BJ (cell line): ENCODE measurements at regions of chr6 and their contacts with region 1.

Region 1: DNA sequence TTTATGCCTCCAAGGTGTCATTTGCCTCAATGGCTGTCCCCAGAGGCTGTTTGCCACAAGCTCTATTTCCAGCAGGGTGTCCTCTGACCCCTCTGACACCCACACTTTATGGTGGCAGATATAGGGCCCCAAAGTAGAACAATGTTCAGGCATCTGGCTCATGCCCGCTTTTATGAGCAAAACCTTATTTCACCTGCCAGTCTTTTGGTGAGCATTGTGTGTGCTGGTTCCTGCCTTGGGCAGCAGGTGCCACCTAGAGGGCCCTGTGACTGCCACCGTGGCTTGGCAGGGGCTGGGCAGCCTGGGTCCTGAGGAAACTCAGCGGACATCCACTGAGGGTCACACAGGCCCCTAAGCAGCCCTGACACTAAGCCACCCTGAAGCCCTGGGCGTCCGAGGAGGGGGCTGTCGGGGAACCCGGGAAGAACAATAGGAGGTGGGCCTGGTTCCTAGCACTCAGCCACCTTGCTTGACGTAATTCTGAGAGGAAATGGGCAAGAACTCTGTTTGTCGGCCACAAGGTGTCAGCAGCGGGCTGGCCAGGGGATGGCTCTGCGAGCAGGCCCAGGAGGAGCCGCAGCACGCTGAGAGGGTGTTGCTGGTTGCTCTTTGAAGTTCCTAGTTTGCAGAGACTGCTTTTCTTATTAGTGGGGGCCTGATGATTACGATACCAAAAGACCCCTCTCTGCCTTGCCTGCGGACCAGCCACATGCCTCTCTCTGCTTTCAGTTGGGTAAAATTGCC is 148.9 kb downstream of the SCML4 start:
- DNase-seq: no peak
- H3K4me3 ChIP-seq: no peak overlapping the region
- H3K27me3 ChIP-seq: no peaks in the 10 kb centered on the region
- CTCF ChIP-seq: peak; percentile 93

Region 2: GRCh38 chr6:107539409-107539808 is 135.8 kb before region 1 on chr6:
- CTCF ChIA-PET with region 1: no interaction called
- POLR2A ChIA-PET with region 1: no interaction called
- DNase-seq: no peak
- H3K4me3 ChIP-seq: no peak overlapping the region
- H3K27me3 ChIP-seq: no peaks in the 10 kb centered on the region; the same call in 1 of the 2 replicates
- CTCF ChIP-seq: no peak

Region 3: DNA sequence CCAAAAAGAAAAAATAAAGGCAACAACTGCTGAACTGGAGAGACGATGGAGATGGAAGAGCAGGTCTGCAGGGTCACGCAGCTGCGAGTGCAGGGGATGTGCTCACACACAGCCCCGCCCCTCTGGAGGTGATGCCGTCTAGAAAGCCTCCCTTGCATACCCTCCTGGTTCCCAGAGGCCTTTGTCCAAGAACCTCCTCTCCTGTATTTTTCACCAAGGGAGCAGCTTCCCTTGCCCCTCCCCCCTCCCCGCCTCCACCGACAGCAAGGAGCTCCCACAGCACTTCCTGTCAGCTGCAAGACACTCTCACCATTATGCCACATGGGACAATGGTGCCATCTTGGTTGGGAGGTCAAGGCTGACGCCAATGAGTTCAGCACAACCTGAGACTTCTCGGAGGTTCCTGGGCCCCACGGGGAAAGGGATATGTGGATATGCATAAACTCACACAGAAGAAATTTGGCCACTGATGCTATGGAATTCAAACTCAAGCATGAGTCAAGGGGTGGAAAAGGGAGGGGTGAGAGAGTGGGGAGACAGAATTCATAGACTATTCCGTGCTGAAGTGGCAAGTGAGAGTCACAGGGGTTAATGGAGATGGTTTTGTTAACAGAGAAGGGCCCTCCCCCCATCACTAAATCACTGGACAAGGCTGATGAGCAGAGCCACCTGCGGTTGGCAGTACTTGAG is 16.0 kb after region 1 on chr6:
- CTCF ChIA-PET with region 1: interaction called, 17 read pairs
- POLR2A ChIA-PET with region 1: interaction called, 6 read pairs
- DNase-seq: no peak
- H3K4me3 ChIP-seq: no peak overlapping the region
- H3K27me3 ChIP-seq: no peaks in the 10 kb centered on the region
- CTCF ChIP-seq: no peak

Region 4: GRCh38 chr6:107704347-107705013 is 29.3 kb after region 1 on chr6:
- CTCF ChIA-PET with region 1: interaction called, 46 read pairs
- POLR2A ChIA-PET with region 1: no interaction called
- DNase-seq: no peak
- H3K4me3 ChIP-seq: no peak overlapping the region
- H3K27me3 ChIP-seq: no peaks in the 10 kb centered on the region
- CTCF ChIP-seq: peak; percentile 73

Region 5: DNA sequence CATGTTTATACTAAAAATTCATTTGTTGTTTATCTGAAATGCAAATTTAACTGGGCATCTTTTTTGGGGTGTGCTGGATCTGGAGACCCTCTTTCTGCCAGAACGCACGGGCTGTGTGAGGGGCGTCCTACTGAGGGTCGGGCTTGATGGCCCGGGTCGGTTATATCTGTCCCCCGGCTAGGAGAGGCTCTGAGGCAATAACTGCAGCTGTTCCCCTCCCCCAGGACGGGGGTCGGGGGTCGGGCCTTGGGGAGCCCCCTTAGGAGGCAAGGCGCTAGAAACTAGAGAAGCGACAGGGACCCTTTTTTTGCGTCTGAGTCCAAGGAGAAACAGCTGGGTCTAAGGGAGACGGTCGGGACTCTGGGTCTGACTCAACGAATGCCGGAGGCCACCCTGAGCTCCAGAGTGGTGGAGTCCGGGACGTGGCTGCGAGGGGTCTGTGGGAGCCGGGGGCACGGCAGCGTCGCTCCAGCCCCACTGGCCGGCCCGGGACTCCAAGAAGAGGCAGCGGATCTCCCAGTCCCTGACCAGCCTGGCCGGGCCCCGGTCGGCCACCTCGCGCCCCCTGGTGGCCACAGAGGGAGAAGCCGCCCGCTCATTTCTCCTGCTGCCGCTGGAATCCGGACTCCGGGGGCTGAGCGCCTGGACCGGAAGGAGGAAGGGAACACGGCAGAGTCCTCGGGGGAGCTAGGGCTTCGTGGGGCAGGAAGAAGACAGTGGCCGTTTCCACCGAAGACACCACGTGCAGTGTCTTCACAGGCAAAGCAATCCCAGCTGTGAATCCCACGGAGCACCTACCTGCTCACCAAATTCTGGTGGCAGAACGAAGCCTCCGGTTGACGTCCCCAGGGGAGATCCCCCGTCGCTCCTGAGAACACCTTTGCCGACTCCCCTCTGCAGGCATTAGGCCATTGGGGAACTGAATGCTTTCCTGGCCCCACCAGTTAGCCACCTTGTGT is 173.0 kb after region 1 on chr6:
- CTCF ChIA-PET with region 1: interaction called, 26 read pairs
- POLR2A ChIA-PET with region 1: no interaction called
- DNase-seq: no peak
- H3K4me3 ChIP-seq: peak overlapping the region; percentile 51
- H3K27me3 ChIP-seq: peaks cover 7% of the 10 kb centered on the region
- CTCF ChIP-seq: peak; percentile 97